A549 (cell line): ENCODE measurements at regions of chr1 and their contacts with region 1.

Region 1: GRCh38 chr1:185170291-185170848 is 13.4 kb downstream of the SWT1 start:
- DNase-seq: peak; percentile 36 to 60
- ATAC-seq: peak; percentile 95 to 97
- H3K4me3 ChIP-seq: no peak overlapping the region
- H3K27ac ChIP-seq: no peak overlapping the region
- H3K4me1 ChIP-seq: no peaks in the 10 kb centered on the region
- CTCF ChIP-seq: peak; percentile 84
- EP300 ChIP-seq: no peak
- POLR2A ChIP-seq: no peak
- RAD21 ChIP-seq: peak; percentile 68 to 71

Region 2: DNA sequence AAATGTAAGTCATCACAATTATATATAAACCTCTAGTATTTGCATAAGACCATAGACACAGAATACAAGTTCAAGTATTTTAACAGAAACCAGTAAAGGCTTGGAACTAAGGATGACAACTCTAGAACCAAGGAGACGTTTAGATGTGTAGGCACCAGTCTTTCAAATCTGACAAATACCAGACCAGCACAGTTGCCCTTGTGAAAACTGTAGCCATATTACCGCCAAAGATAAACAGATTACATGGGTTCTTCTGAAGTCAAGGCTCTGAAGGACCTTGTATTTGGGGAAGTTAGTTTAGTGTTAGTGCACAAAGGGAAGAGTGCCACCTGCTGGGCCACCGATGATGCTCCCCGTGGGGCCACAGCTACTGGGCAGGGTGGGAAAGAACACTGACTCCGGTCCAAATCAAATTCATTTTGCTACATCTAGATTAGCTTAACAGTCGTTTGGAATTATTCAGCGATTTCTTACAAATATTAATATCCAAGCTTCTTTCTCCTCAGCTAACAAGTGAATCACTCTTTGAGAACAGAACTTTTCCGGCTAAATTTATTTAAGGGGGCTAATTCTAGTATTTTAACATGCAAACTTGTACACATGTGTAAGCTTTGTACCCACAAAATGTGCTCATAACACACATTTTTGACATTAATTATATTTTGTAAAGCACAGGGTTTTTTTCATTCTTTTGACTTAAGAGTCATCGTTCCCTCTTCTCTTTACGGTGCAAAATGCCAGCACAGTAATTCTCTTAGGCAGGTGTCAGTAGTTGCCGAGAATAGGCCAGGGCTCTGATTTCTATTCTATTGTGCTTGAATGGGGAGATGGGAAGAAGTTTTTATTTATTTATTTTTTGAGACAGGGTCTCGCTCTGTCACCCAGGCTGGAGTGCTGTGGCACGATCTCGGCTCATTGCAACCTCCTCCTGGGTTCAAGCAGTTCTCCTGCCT is 188.1 kb before region 1 on chr1:
- CTCF ChIA-PET with region 1: interaction called, 12 read pairs
- POLR2A ChIA-PET with region 1: no interaction called
- DNase-seq: peak; percentile 32 to 71
- ATAC-seq: peak; percentile 98 to 99
- H3K4me3 ChIP-seq: no peak overlapping the region
- H3K27ac ChIP-seq: no peak overlapping the region
- H3K4me1 ChIP-seq: no peaks in the 10 kb centered on the region
- CTCF ChIP-seq: peak; percentile 89
- EP300 ChIP-seq: no peak
- POLR2A ChIP-seq: no peak
- RAD21 ChIP-seq: peak; percentile 84 to 86

Region 3: DNA sequence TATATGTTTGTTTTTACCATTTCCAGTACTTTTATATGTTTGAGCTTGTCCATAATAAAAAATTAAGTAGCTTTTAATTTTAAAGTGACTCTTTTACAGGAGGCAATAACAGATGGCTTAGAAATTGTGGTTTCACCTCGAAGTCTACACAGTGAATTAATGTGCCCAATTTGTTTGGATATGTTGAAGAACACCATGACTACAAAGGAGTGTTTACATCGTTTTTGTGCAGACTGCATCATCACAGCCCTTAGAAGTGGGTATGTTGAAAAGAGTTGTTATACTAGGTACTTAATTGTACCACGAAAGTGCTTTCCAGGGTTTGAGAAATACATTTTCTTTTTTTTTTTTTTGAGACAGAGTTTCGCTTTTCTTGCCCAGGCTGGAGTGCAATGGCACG is 78.9 kb before region 1 on chr1:
- CTCF ChIA-PET with region 1: no interaction called
- POLR2A ChIA-PET with region 1: no interaction called
- DNase-seq: no peak
- ATAC-seq: no peak
- H3K4me3 ChIP-seq: no peak overlapping the region
- H3K27ac ChIP-seq: no peak overlapping the region
- H3K4me1 ChIP-seq: no peaks in the 10 kb centered on the region
- CTCF ChIP-seq: no peak
- EP300 ChIP-seq: no peak
- POLR2A ChIP-seq: no peak
- RAD21 ChIP-seq: no peak

Region 4: GRCh38 chr1:185156854-185157598 is 13.3 kb before region 1 on chr1 and contains the starts of genes SWT1 and TRMT1L:
- CTCF ChIA-PET with region 1: interaction called, 21 read pairs
- POLR2A ChIA-PET with region 1: interaction called, 4 read pairs
- DNase-seq: peak; percentile 81 to 99
- ATAC-seq: peak; percentile 95 to 97
- H3K4me3 ChIP-seq: peak within 1 kb of the TSS; percentile 86
- H3K27ac ChIP-seq: peak within 1 kb of the TSS; percentile 92 to 95
- H3K4me1 ChIP-seq: peaks cover 26% of the 10 kb centered on the region
- CTCF ChIP-seq: no peak
- EP300 ChIP-seq: no peak
- POLR2A ChIP-seq: peak; percentile 90
- RAD21 ChIP-seq: no peak
- polyA plus RNA-seq, gene SWT1: 2.2 and 2.4 TPM in 2 replicates
- polyA plus RNA-seq, gene TRMT1L: 45.1 and 52.4 TPM in 2 replicates

Region 5: GRCh38 chr1:185681034-185681633 is 510.8 kb after region 1 on chr1:
- CTCF ChIA-PET with region 1: interaction called, 12 read pairs
- POLR2A ChIA-PET with region 1: no interaction called
- DNase-seq: peak; percentile 21 to 56
- ATAC-seq: peak; percentile 77 to 86; a peak in 4 of 6 replicates
- H3K4me3 ChIP-seq: no peak overlapping the region
- H3K27ac ChIP-seq: no peak overlapping the region
- H3K4me1 ChIP-seq: no peaks in the 10 kb centered on the region
- CTCF ChIP-seq: peak; percentile 77
- EP300 ChIP-seq: no peak
- POLR2A ChIP-seq: no peak
- RAD21 ChIP-seq: peak; percentile 86 to 87